Activated CD8-positive, alpha-beta T cell treated with anti-CD3 and anti-CD28 coated beads, Interleukin-2, amount 10 ng/mL, durations not matched to agents 7 days and 5 days (primary cell): ENCODE measurements at regions of chr1 and their contacts with region 1.

Region 1: DNA sequence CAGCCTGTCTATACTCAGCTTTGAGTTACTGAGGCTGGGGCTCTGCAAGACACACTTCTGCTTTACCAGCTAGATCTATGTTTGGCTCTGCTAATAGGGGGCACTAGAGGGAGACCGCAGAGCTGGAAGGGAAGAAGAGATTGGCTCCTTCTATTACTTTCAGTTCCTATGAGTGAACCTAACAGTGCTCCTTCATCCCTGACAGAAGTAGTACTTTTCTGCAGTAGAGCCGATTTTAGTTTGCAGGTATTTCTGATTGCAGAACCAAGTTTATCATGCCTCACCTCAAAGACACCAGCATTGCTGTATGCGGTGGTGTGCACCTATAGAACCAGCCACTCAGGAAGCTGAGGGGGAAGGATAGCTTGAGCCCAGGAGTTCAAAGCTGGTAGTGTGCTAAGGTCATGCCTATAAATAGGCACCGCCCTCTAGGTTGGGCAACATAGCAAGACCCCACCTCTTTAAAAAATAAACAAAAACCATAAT is 5.7 kb upstream of the ZDHHC18 start:
- DNase-seq: peak; percentile 64
- ATAC-seq: peak; percentile 93
- H3K4me3 Mint-ChIP-seq: peak overlapping the region; percentile 70
- H3K27ac Mint-ChIP-seq: peak overlapping the region; percentile 80
- H3K4me1 Mint-ChIP-seq: peaks cover 25% of the 10 kb centered on the region
- H3K27me3 Mint-ChIP-seq: no peaks in the 10 kb centered on the region

Region 2: GRCh38 chr1:26723013-26723991 is 97.5 kb before region 1 on chr1:
- CTCF ChIA-PET with region 1: no interaction called
- POLR2A ChIA-PET with region 1: no interaction called
- DNase-seq: peak; percentile 48
- ATAC-seq: peak; percentile 68
- H3K4me3 Mint-ChIP-seq: peak overlapping the region; percentile 42
- H3K27ac Mint-ChIP-seq: peak overlapping the region; percentile 56
- H3K4me1 Mint-ChIP-seq: peaks cover 86% of the 10 kb centered on the region
- H3K27me3 Mint-ChIP-seq: no peaks in the 10 kb centered on the region

Region 3: GRCh38 chr1:26799479-26800142 is 21.2 kb before region 1 on chr1:
- CTCF ChIA-PET with region 1: interaction called, 31 read pairs
- POLR2A ChIA-PET with region 1: interaction called, 5 read pairs
- DNase-seq: peak; percentile 54
- ATAC-seq: peak; percentile 76
- H3K4me3 Mint-ChIP-seq: peak overlapping the region; percentile 74
- H3K27ac Mint-ChIP-seq: peak overlapping the region; percentile 90
- H3K4me1 Mint-ChIP-seq: peaks cover 51% of the 10 kb centered on the region
- H3K27me3 Mint-ChIP-seq: no peaks in the 10 kb centered on the region